ENCODE measurements at regions of chr1 and their contacts with region 1.

Region 1: GRCh38 chr1:220089650-220090556 is at the start of gene BPNT1:
- DNase-seq: peak; percentile 98
- H3K4me3 Mint-ChIP-seq: peak within 1 kb of the TSS; percentile 87
- H3K27ac Mint-ChIP-seq: peak within 1 kb of the TSS; percentile 90
- H3K4me1 Mint-ChIP-seq: peaks cover 19% of the 10 kb centered on the region
- H3K27me3 Mint-ChIP-seq: no peaks in the 10 kb centered on the region
- total RNA-seq, gene BPNT1: 23.4 to 23.8 TPM

Region 2: GRCh38 chr1:220113136-220113695 is 23.3 kb after region 1 on chr1:
- CTCF ChIA-PET with region 1: interaction called, 10 read pairs
- POLR2A ChIA-PET with region 1: no interaction called
- DNase-seq: peak; percentile 43
- H3K4me3 Mint-ChIP-seq: peak overlapping the region; percentile 5
- H3K27ac Mint-ChIP-seq: no peak overlapping the region
- H3K4me1 Mint-ChIP-seq: peaks cover 6% of the 10 kb centered on the region
- H3K27me3 Mint-ChIP-seq: no peaks in the 10 kb centered on the region